PC-3 (cell line): ENCODE measurements at regions of chr7 and their contacts with region 1.

Region 1: DNA sequence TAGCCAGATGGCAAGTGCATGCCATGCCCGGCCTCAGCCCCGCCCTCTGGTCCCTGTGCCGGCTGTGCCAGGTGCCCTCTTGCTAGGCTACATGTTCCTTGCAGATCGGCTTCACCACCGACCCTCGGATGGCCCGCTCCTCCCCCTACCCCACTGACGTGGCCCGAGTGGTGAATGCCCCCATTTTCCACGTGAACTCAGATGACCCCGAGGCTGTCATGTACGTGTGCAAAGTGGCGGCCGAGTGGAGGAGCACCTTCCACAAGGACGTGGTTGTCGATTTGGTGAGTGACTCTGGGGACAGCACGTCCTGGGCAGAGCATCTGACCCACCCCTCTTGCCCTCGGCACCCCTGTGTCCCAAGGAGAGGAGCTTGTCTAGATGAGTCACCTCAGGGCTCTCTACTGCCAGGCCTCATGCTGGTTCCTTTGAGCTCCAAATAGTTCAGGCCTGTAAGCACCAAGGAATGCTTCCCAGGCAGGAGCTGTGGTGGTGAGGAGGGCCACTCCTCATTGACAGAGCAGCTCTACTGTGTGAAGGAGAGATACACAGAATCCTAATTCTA is 54.8 kb upstream of the ZMIZ2 start:
- DNase-seq: no peak
- ATAC-seq: 0 out of 2 replicates have a peak, but pooled peaks have one; percentile 15
- H3K4me3 ChIP-seq: no peak overlapping the region
- H3K27ac ChIP-seq: no peak overlapping the region
- H3K4me1 ChIP-seq: no peaks in the 10 kb centered on the region
- H3K27me3 ChIP-seq: no peaks in the 10 kb centered on the region
- CTCF ChIP-seq: no peak

Region 2: GRCh38 chr7:44097064-44097932 is 596.5 kb before region 1 on chr7:
- CTCF ChIA-PET with region 1: no interaction called
- POLR2A ChIA-PET with region 1: no interaction called
- intact Hi-C with region 1: no loop called
- DNase-seq: no peak
- ATAC-seq: no peak
- H3K4me3 ChIP-seq: no peak overlapping the region
- H3K27ac ChIP-seq: no peak overlapping the region
- H3K4me1 ChIP-seq: no peaks in the 10 kb centered on the region
- H3K27me3 ChIP-seq: no peaks in the 10 kb centered on the region
- CTCF ChIP-seq: no peak

Region 3: GRCh38 chr7:44515590-44516268 is 178.1 kb before region 1 on chr7:
- CTCF ChIA-PET with region 1: no interaction called
- POLR2A ChIA-PET with region 1: no interaction called
- intact Hi-C with region 1: no loop called
- DNase-seq: no peak
- ATAC-seq: no peak; the same call in 1 of the 2 replicates
- H3K4me3 ChIP-seq: no peak overlapping the region
- H3K27ac ChIP-seq: no peak overlapping the region
- H3K4me1 ChIP-seq: no peaks in the 10 kb centered on the region
- H3K27me3 ChIP-seq: no peaks in the 10 kb centered on the region
- CTCF ChIP-seq: no peak

Region 4: GRCh38 chr7:44555397-44555796 is 138.4 kb before region 1 on chr7:
- CTCF ChIA-PET with region 1: no interaction called
- POLR2A ChIA-PET with region 1: no interaction called
- intact Hi-C with region 1: no loop called
- DNase-seq: no peak
- ATAC-seq: no peak
- H3K4me3 ChIP-seq: no peak overlapping the region
- H3K27ac ChIP-seq: no peak overlapping the region
- H3K4me1 ChIP-seq: no peaks in the 10 kb centered on the region
- H3K27me3 ChIP-seq: no peaks in the 10 kb centered on the region
- CTCF ChIP-seq: no peak

Region 5: GRCh38 chr7:44638611-44639557 is 54.9 kb before region 1 on chr7:
- CTCF ChIA-PET with region 1: no interaction called
- POLR2A ChIA-PET with region 1: no interaction called
- intact Hi-C with region 1: loop called (anchors 10 kb)
- DNase-seq: peak; percentile 82
- ATAC-seq: peak; percentile 84
- H3K4me3 ChIP-seq: no peak overlapping the region
- H3K27ac ChIP-seq: peak overlapping the region; percentile 98
- H3K4me1 ChIP-seq: peaks cover 51% of the 10 kb centered on the region
- H3K27me3 ChIP-seq: no peaks in the 10 kb centered on the region
- CTCF ChIP-seq: no peak

Region 6: DNA sequence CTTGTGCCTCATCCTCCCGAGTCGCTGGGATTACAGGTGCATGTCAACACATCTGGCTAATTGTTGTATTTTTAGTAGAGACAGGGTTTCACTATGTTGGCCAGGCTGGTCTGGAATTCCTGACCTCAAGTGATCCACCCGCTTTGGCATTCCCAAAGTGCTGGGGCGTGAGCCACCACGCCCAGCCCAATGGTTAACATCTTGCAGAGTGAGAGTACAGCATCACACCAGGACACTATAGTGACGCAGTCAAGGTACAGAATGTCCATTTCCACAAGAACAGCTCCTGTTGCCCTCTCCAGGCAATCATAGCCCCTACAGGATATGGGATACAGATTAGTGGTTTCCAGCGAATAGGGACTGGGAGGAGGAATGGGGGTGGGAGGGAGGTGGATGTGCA is 251.0 kb after region 1 on chr7:
- CTCF ChIA-PET with region 1: no interaction called
- POLR2A ChIA-PET with region 1: no interaction called
- intact Hi-C with region 1: no loop called
- DNase-seq: no peak
- ATAC-seq: no peak
- H3K4me3 ChIP-seq: no peak overlapping the region
- H3K27ac ChIP-seq: no peak overlapping the region
- H3K4me1 ChIP-seq: no peaks in the 10 kb centered on the region
- H3K27me3 ChIP-seq: no peaks in the 10 kb centered on the region
- CTCF ChIP-seq: no peak